ENCODE measurements at regions of chr5 and their contacts with region 1.

Region 1: DNA sequence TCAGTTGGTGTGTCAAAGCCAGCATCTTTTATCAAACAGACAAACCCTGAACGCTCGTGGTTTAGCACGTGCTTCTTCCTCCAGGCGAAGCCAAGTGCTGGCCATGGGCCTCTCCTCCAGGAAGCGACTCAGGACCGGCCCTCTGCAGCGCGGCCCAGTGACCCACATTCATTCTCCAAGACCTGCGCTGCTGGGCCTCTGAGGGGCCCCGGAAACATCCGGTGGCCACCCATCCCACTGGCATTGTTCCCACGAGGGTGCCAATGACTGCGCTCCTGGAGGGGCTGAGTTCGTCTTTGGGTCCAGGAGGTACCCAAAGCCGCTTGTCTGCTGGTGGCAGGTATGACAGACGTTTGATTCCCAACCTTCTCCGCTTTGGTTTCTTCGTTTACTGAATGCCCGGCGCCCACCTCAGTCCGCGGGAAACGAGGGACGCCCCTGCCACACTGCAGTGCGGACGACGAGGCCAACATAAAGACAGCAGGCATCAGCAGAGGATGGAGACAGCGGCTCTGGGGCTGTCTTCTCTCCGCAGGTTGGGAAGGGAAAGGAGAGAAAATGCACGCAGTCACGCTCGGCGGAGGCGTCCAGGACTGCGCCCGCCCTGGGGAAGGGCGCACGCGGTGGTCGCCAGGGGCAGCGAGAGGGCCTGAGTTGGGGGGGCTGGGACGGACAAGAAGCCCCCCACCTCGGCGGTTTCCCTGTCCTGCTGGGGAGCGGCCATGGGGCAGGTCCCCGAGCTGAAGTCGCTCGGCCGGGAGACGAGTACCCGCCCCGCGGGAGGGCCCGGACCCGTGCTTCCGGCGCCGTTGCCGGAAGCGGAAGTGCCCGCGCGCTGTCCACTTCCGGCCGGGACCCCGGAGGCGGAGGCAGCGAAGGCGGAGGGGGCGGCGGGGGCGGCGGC is at the start of gene EXOC3:
- DNase-seq: peak; percentile 86
- H3K4me3 ChIP-seq: peak within 1 kb of the TSS; percentile 81 to 95 (median 83)
- H3K27ac ChIP-seq: peak within 1 kb of the TSS; percentile 81 to 92 (median 83)
- H3K4me1 ChIP-seq: peaks cover 0 to 27% (median 23%) of the 10 kb centered on the region in 4 donors
- H3K27me3 ChIP-seq: peaks cover 0 to 10% (median 5%) of the 10 kb centered on the region in 3 donors
- CTCF ChIP-seq: no peak
- EP300 ChIP-seq: no peak
- POLR2A ChIP-seq: peak; percentile 46 to 64
- total RNA-seq, gene EXOC3: 45.7 to 68.7 (median 48.5) TPM

Region 2: GRCh38 chr5:270340-270739 is 172.2 kb before region 1 on chr5:
- intact Hi-C with region 1: loop called (anchors 10 kb)
- DNase-seq: no peak
- H3K4me3 ChIP-seq: peak overlapping the region in 1 of 4 donors; percentile 100
- H3K27ac ChIP-seq: peak overlapping the region; percentile 81 to 95 (median 90)
- H3K4me1 ChIP-seq: peaks cover 0 to 24% (median 11%) of the 10 kb centered on the region in 4 donors
- H3K27me3 ChIP-seq: no peaks in the 10 kb centered on the region
- CTCF ChIP-seq: no peak
- EP300 ChIP-seq: no peak
- POLR2A ChIP-seq: no peak

Region 3: GRCh38 chr5:472656-473553 is 30.3 kb after region 1 on chr5:
- intact Hi-C with region 1: loop called (anchors 1 kb)
- DNase-seq: peak; percentile 90
- H3K4me3 ChIP-seq: peak overlapping the region; percentile 60 to 99 (median 88)
- H3K27ac ChIP-seq: peak overlapping the region; percentile 79 to 83 (median 80)
- H3K4me1 ChIP-seq: peaks cover 0 to 31% (median 23%) of the 10 kb centered on the region in 4 donors
- H3K27me3 ChIP-seq: peaks cover 22 to 33% (median 30%) of the 10 kb centered on the region in 3 donors
- CTCF ChIP-seq: no peak
- EP300 ChIP-seq: no peak
- POLR2A ChIP-seq: no peak

Region 4: GRCh38 chr5:611721-612486 is 169.3 kb after region 1 on chr5 and contains the start of gene CEP72:
- intact Hi-C with region 1: loop called (anchors 10 kb)
- DNase-seq: peak; percentile 94
- H3K4me3 ChIP-seq: peak within 1 kb of the TSS; percentile 67 to 95 (median 86)
- H3K27ac ChIP-seq: peak within 1 kb of the TSS; percentile 20 to 60 (median 40)
- H3K4me1 ChIP-seq: peaks cover 0 to 18% (median 10%) of the 10 kb centered on the region in 4 donors
- H3K27me3 ChIP-seq: peaks cover 0 to 7% (median 0%) of the 10 kb centered on the region in 3 donors
- CTCF ChIP-seq: no peak
- EP300 ChIP-seq: no peak
- POLR2A ChIP-seq: no peak
- total RNA-seq, gene CEP72: 0.36 to 5.0 (median 1.4) TPM

Region 5: GRCh38 chr5:892394-893136 is 450.0 kb after region 1 on chr5 and contains the starts of genes BRD9 and TRIP13:
- intact Hi-C with region 1: loop called (anchors 5 kb)
- DNase-seq: peak; percentile 88
- H3K4me3 ChIP-seq: peak within 1 kb of the TSS; percentile 76 to 96 (median 89)
- H3K27ac ChIP-seq: peak within 1 kb of the TSS; percentile 83 to 92 (median 88)
- H3K4me1 ChIP-seq: peaks cover 0 to 26% (median 21%) of the 10 kb centered on the region in 4 donors
- H3K27me3 ChIP-seq: no peaks in the 10 kb centered on the region
- CTCF ChIP-seq: no peak
- EP300 ChIP-seq: no peak
- POLR2A ChIP-seq: no peak
- total RNA-seq, gene BRD9: 21.4 to 38.8 (median 24.6) TPM
- total RNA-seq, gene TRIP13: 0.16 to 0.83 (median 0.54) TPM in 3 of 4 donors, not detected in the other